ENCODE measurements at regions of chr16 and their contacts with region 1.

Region 1: GRCh38 chr16:30065143-30065850 is at the start of gene ALDOA:
- DNase-seq: peak; percentile 98
- H3K4me3 ChIP-seq: peak within 1 kb of the TSS; percentile 97
- H3K27ac ChIP-seq: peak within 1 kb of the TSS; percentile 98
- H3K27me3 ChIP-seq: no peaks in the 10 kb centered on the region
- CTCF ChIP-seq: no peak
- polyA plus RNA-seq, gene ALDOA: 631 and 806 TPM in 2 replicates

Region 2: DNA sequence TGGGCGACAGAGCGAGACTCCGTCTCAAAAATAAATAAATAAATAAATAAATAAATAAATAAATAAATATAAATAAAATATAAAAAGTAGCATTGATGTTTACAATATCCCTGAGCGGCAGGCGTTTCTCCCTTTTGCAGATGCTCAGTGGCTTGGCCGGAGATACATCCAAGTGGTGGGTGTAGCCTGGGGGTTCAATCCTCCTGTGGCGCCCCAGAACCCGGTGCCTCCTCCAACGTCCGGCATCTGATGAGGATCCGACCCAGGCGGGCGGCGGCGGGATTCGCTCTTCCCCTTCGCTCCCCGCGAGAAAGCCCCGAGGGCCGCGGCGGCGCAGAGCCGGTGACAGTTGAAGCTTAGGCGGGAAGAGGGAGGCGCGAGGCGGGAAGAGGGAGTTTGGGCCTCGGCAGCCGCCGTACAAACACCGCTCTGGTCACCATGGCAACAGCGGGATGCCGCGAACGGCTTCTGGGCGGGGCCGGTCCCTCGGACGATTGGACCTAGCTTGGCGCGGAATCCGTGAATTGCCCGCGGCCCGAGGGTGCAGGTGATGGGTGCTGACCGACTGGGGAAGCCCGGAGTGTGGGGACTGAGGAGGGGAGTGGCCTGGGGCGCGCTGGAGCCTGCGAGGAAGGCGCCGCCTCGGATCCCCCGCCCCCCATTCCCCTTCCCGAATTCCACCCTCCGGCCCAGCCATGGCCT is 12.5 kb before region 1 on chr16:
- CTCF ChIA-PET with region 1: interaction called, 4 read pairs
- POLR2A ChIA-PET with region 1: interaction called, 25 read pairs
- DNase-seq: peak; percentile 75
- H3K4me3 ChIP-seq: peak overlapping the region; percentile 81
- H3K27ac ChIP-seq: peak overlapping the region; percentile 39
- H3K27me3 ChIP-seq: no peaks in the 10 kb centered on the region
- CTCF ChIP-seq: no peak

Region 3: GRCh38 chr16:30075507-30076275 is 10.4 kb after region 1 on chr16 and contains the start of gene PPP4C:
- CTCF ChIA-PET with region 1: interaction called, 4 read pairs
- POLR2A ChIA-PET with region 1: interaction called, 24 read pairs
- DNase-seq: peak; percentile 66
- H3K4me3 ChIP-seq: peak within 1 kb of the TSS; percentile 99
- H3K27ac ChIP-seq: peak within 1 kb of the TSS; percentile 81
- H3K27me3 ChIP-seq: no peaks in the 10 kb centered on the region
- CTCF ChIP-seq: 0 out of 2 replicates have a peak, but pooled peaks have one; percentile 8
- polyA plus RNA-seq, gene PPP4C: 112 and 140 TPM in 2 replicates